AG04450 (cell line): ENCODE measurements at regions of chr4 and their contacts with region 1.

Region 1: GRCh38 chr4:8428293-8429097 is 12.0 kb downstream of the ACOX3 start:
- DNase-seq: peak; percentile 67
- H3K4me3 ChIP-seq: peak overlapping the region; percentile 78
- H3K27ac ChIP-seq: peak overlapping the region; percentile 21
- H3K27me3 ChIP-seq: no peaks in the 10 kb centered on the region
- CTCF ChIP-seq: peak; percentile 59

Region 2: DNA sequence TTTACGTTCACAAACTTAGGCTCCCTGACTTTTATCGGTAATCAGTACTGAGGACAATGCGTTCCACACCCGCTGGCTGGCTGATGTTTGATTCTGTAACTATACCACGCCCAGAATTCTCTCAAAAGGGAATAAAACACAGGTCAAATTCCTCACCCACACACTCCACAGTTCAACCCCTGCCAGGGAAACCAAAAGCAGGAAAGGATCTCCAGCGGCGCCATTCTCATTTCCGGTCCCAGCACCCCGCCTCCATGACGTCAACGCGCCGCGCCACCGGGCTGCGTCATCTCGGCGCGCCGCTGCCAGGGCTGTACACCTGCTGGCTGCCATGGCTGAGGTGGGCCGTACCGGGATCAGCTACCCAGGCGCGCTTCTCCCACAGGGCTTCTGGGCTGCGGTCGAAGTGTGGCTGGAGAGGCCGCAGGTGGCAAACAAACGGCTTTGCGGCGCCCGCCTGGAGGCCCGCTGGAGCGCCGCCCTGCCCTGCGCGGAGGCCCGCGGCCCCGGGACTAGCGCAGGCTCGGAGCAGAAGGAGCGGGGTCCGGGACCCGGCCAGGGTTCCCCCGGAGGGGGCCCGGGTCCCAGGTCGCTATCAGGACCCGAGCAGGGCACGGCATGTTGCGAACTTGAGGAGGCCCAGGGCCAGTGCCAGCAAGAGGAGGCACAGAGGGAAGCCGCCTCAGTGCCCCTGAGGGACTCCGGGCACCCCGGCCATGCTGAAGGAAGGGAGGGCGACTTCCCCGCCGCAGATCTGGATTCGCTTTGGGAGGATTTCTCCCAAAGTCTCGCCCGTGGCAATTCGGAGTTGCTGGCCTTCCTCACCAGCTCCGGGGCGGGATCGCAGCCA is 12.2 kb after region 1 on chr4 and contains the starts of genes ACOX3 and TRMT44:
- CTCF ChIA-PET with region 1: interaction called, 10 read pairs
- POLR2A ChIA-PET with region 1: interaction called, 5 read pairs
- DNase-seq: peak; percentile 74
- H3K4me3 ChIP-seq: peak within 1 kb of the TSS; percentile 70
- H3K27ac ChIP-seq: peak within 1 kb of the TSS; percentile 98
- H3K27me3 ChIP-seq: no peaks in the 10 kb centered on the region
- CTCF ChIP-seq: no peak
- polyA plus RNA-seq, gene ACOX3: 7.9 and 10.2 TPM in 2 replicates
- polyA plus RNA-seq, gene TRMT44: 6.9 and 7.0 TPM in 2 replicates